Activated T-helper 1 cell treated with anti-CD3 and anti-CD28 coated beads, Interleukin-12 subunit alpha, Interleukin-12 subunit beta, Interleukin-2, Interleukin-4 antibody, amounts not matched to agents 30 ng/mL and 10 ng/mL and 1 ng/mL, durations not matched to agents 14 hours and 24 hours and 36 hours (primary cell): ENCODE measurements at regions of chr13 and their contacts with region 1.

Region 1: DNA sequence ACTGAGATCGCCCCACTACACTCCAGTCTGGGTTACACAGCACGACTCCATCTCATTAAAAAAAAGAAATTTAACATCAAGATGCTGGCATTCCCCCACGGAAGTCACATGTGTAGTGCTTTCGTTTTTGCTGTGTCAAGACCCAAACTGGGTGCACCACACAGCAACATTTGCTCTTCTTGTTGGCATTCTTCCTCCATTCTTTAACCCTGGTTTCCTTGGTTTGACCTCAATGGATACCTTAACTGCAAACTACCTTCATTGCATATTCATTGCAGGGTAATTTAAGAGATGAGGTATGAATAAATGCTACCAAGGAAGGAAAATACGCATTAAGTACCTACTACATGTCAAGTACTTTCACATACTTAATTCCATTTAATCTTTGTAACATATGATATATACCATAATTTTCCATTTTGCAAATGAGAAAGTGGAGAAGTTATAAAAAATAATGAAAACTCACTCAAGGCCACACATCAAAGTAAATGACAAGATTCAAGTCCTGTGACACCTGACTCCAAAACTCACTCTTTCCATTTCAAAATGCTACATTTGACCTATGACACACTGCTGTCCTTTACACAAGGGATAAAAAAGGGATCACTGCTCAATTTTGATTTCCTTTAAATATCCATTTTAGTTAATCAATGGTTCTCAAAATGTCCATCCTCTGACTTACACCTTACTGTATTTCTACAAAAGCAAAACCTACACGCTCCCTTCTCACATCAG is 59.2 kb downstream of the STK24 start:
- DNase-seq: peak; percentile 40
- H3K4me3 Mint-ChIP-seq: peak overlapping the region; percentile 27
- H3K27ac Mint-ChIP-seq: peak overlapping the region; percentile 79
- H3K4me1 Mint-ChIP-seq: peaks cover 91% of the 10 kb centered on the region
- H3K27me3 Mint-ChIP-seq: no peaks in the 10 kb centered on the region

Region 2: GRCh38 chr13:98504371-98504963 is 13.3 kb before region 1 on chr13:
- intact Hi-C with region 1: loop called (anchors 1 kb)
- DNase-seq: peak; percentile 27
- H3K4me3 Mint-ChIP-seq: no peak overlapping the region
- H3K27ac Mint-ChIP-seq: peak overlapping the region; percentile 16
- H3K4me1 Mint-ChIP-seq: peaks cover 66% of the 10 kb centered on the region
- H3K27me3 Mint-ChIP-seq: no peaks in the 10 kb centered on the region

Region 3: GRCh38 chr13:98528663-98529570 is 11.2 kb after region 1 on chr13:
- intact Hi-C with region 1: loop called (anchors 1 kb)
- DNase-seq: no peak
- H3K4me3 Mint-ChIP-seq: peak overlapping the region; percentile 47
- H3K27ac Mint-ChIP-seq: peak overlapping the region; percentile 91
- H3K4me1 Mint-ChIP-seq: peaks cover 81% of the 10 kb centered on the region
- H3K27me3 Mint-ChIP-seq: no peaks in the 10 kb centered on the region

Region 4: GRCh38 chr13:98563069-98563468 is 45.3 kb after region 1 on chr13:
- intact Hi-C with region 1: loop called (anchors 1 kb)
- DNase-seq: peak; percentile 42
- H3K4me3 Mint-ChIP-seq: peak overlapping the region; percentile 71
- H3K27ac Mint-ChIP-seq: peak overlapping the region; percentile 88
- H3K4me1 Mint-ChIP-seq: peaks cover 91% of the 10 kb centered on the region
- H3K27me3 Mint-ChIP-seq: no peaks in the 10 kb centered on the region

Region 5: GRCh38 chr13:98653463-98653985 is 135.8 kb after region 1 on chr13:
- intact Hi-C with region 1: loop called (anchors 2 kb)
- DNase-seq: peak; percentile 52
- H3K4me3 Mint-ChIP-seq: no peak overlapping the region
- H3K27ac Mint-ChIP-seq: no peak overlapping the region
- H3K4me1 Mint-ChIP-seq: peaks cover 4% of the 10 kb centered on the region
- H3K27me3 Mint-ChIP-seq: peaks cover 5% of the 10 kb centered on the region

Region 6: DNA sequence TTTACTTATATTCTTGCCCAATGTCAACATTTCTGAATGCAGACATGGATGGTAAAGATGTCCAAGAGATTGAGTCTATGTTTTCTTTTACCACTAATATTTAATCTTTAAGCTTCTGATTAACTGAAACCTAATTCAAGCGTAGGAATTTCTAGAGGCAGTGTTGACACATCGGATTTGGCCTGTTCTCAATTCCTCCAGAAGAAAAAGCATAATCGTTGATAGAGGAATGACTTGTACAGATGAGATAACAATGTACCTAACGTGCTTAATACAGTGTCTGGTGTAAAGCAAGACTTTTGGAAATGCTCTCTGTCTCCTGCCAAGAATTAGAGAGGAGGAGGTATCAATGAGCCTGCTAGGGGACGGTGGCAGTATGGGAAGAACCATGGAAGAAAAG is 199.5 kb after region 1 on chr13:
- intact Hi-C with region 1: no loop called
- DNase-seq: no peak
- H3K4me3 Mint-ChIP-seq: no peak overlapping the region
- H3K27ac Mint-ChIP-seq: no peak overlapping the region
- H3K4me1 Mint-ChIP-seq: no peaks in the 10 kb centered on the region
- H3K27me3 Mint-ChIP-seq: peaks cover 2% of the 10 kb centered on the region